CD8-positive, alpha-beta T cell (primary cell): ENCODE measurements at regions of chr2 and their contacts with region 1.

Region 1: GRCh38 chr2:207529330-207530159 is at the start of gene CREB1:
- DNase-seq: peak; percentile 99 to 100 (median 100)
- ATAC-seq: peak; percentile 80
- H3K4me3 ChIP-seq: peak within 1 kb of the TSS; percentile 73 to 82
- H3K4me3 Mint-ChIP-seq: peak within 1 kb of the TSS; percentile 90
- H3K27ac ChIP-seq: peak within 1 kb of the TSS; percentile 97 to 99
- H3K27ac Mint-ChIP-seq: peak within 1 kb of the TSS; percentile 98
- H3K4me1 ChIP-seq: peaks cover 59% of the 10 kb centered on the region
- H3K4me1 Mint-ChIP-seq: peaks cover 70% of the 10 kb centered on the region
- H3K27me3 ChIP-seq: no peaks in the 10 kb centered on the region
- H3K27me3 Mint-ChIP-seq: no peaks in the 10 kb centered on the region
- CTCF ChIP-seq: no peak
- total RNA-seq, gene CREB1: 43.9 to 51.4 TPM

Region 2: DNA sequence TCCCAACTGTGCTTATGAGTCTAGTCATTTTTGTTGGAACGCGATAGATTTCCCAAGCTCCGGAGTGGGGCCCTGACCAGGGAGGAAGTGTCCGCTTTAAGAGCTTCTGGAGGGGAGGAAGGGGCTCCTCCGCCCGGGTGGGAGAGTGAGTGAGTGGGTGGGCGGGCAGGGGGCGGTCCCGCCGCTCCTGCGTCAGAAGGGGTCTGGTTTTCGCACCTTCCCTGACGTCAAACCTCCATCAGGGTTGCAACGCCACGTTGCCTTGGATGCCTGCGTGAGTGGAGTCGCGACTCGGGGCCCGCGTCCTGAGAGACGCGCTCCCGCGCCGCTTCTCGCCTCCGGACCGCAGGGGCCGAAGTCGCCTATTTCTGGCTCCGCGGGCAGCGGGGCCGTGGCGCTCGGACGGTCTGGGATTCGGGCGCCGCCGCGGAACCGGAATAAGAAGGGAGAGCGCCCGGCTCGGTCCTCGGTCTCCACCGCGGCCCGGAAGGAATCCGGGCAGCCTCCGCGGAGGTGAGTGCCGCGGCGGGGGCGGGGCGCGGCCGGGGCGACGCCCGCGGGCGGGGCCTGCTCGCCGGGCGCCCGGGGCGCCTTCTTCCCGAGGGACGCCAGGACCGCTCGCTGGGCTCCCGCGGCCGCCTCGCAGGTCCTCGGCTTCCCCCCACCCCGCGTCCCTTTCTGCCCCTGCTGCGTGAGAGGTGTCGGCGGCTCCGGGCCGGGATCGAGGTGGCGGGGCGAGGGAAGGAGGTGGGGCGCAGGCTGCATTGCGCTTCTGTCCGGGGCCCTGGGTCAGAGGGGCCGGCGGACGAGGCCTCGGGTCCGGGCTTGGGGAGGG is 1254.9 kb before region 1 on chr2 and contains the start of gene ZDBF2:
- CTCF ChIA-PET with region 1: no interaction called
- POLR2A ChIA-PET with region 1: no interaction called
- intact Hi-C with region 1: loop called in 1 of 2 experiments (anchors 10 kb)
- DNase-seq: peak in 8 of 9 experiments; percentile 6 to 77 (median 56)
- ATAC-seq: peak; percentile 73
- H3K4me3 ChIP-seq: peak within 1 kb of the TSS; percentile 48 to 52
- H3K4me3 Mint-ChIP-seq: peak within 1 kb of the TSS; percentile 89
- H3K27ac ChIP-seq: peak within 1 kb of the TSS; percentile 46 to 59
- H3K27ac Mint-ChIP-seq: peak within 1 kb of the TSS; percentile 90
- H3K4me1 ChIP-seq: peaks cover 13% of the 10 kb centered on the region
- H3K4me1 Mint-ChIP-seq: peaks cover 18% of the 10 kb centered on the region
- H3K27me3 ChIP-seq: peaks cover 6 to 16% of the 10 kb centered on the region in 2 experiments
- H3K27me3 Mint-ChIP-seq: peaks cover 42% of the 10 kb centered on the region
- CTCF ChIP-seq: no peak
- total RNA-seq, gene ZDBF2: 39.2 to 42.3 TPM

Region 3: GRCh38 chr2:207473049-207473930 is 56.3 kb before region 1 on chr2:
- CTCF ChIA-PET with region 1: interaction called, 7 read pairs
- POLR2A ChIA-PET with region 1: no interaction called
- intact Hi-C with region 1: loop called in 1 of 2 experiments (anchors 1 kb)
- DNase-seq: peak in 6 of 9 experiments; percentile 9 to 62 (median 37)
- ATAC-seq: peak; percentile 57
- H3K4me3 ChIP-seq: no peak overlapping the region
- H3K4me3 Mint-ChIP-seq: no peak overlapping the region
- H3K27ac ChIP-seq: no peak overlapping the region
- H3K27ac Mint-ChIP-seq: no peak overlapping the region
- H3K4me1 ChIP-seq: no peaks in the 10 kb centered on the region
- H3K4me1 Mint-ChIP-seq: peaks cover 13% of the 10 kb centered on the region
- H3K27me3 ChIP-seq: no peaks in the 10 kb centered on the region
- H3K27me3 Mint-ChIP-seq: no peaks in the 10 kb centered on the region
- CTCF ChIP-seq: peak; percentile 33

Region 4: DNA sequence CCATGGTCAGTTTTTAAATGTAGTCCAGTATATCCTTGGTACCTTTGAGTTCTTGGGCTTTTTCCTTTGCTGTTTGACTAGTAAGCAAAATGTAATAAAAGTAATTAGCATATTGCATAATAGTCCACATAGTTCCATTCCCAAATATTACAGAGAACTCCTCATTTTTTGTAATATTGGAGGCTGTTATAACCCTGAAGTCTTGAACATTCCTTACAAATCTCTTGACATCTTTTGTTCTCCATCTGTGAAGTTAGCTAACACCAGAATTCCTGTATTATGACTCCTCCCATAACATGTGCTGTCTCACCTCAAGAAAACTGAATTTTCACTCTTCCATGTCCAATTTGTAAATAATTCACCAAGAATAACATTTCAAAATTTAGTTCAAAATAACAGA is 17.3 kb after region 1 on chr2:
- CTCF ChIA-PET with region 1: no interaction called
- POLR2A ChIA-PET with region 1: interaction called, 14 read pairs
- intact Hi-C with region 1: loop called (anchors 2 kb)
- DNase-seq: no peak
- ATAC-seq: no peak
- H3K4me3 ChIP-seq: no peak overlapping the region
- H3K4me3 Mint-ChIP-seq: no peak overlapping the region
- H3K27ac ChIP-seq: no peak overlapping the region
- H3K27ac Mint-ChIP-seq: no peak overlapping the region
- H3K4me1 ChIP-seq: peaks cover 11% of the 10 kb centered on the region
- H3K4me1 Mint-ChIP-seq: peaks cover 75% of the 10 kb centered on the region
- H3K27me3 ChIP-seq: no peaks in the 10 kb centered on the region
- H3K27me3 Mint-ChIP-seq: no peaks in the 10 kb centered on the region
- CTCF ChIP-seq: no peak

Region 5: GRCh38 chr2:207769597-207770486 is 240.3 kb after region 1 on chr2 and contains the start of gene FZD5:
- CTCF ChIA-PET with region 1: no interaction called
- POLR2A ChIA-PET with region 1: no interaction called
- intact Hi-C with region 1: loop called (anchors 2 to 5 kb)
- DNase-seq: peak; percentile 44 to 90 (median 74)
- ATAC-seq: peak; percentile 71
- H3K4me3 ChIP-seq: peak within 1 kb of the TSS; percentile 67 to 79
- H3K4me3 Mint-ChIP-seq: peak within 1 kb of the TSS; percentile 95
- H3K27ac ChIP-seq: no peak within 1 kb of the TSS
- H3K27ac Mint-ChIP-seq: no peak within 1 kb of the TSS
- H3K4me1 ChIP-seq: peaks cover 36% of the 10 kb centered on the region
- H3K4me1 Mint-ChIP-seq: peaks cover 33% of the 10 kb centered on the region
- H3K27me3 ChIP-seq: peaks cover 4 to 5% of the 10 kb centered on the region in 2 experiments
- H3K27me3 Mint-ChIP-seq: peaks cover 22% of the 10 kb centered on the region
- CTCF ChIP-seq: no peak
- total RNA-seq, gene FZD5: 0.39 to 0.54 TPM

Region 6: DNA sequence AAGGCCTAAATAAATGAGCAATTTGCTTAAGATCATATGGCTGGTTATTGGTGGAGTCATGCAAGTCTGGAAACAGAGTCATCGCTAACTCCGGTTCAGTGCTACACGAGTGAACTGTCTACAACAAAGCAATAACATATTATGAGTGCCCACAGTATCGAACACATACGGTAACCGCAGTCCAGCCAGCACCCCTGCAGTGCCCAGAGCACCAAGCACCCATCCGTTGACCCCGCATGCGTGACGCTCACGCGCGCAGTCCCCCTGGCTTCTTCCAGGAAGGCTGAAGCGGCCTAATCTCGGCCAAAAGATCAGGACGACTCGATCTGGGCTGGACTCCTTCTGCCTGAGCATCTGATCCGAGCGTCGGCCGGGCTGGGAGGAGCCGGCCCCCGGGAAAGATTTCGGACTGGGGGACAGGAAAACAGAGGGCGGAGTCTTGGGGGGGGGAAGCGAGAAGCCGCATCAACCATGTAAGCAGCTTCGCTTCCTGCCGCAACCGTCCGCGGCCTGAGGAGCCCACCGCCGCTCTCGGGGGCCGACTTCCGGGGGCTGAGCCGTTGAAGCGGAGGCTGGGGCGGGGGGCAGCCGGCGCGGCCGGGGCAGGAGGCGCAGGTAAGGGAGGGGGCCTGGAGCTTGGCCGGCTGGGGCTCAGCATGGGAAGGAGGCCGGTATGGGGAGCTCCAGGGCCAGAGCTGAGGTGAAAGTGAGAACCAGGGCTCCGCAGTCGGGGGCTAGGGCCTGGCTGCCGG is 736.4 kb after region 1 on chr2 and contains the start of gene PIKFYVE:
- CTCF ChIA-PET with region 1: no interaction called
- POLR2A ChIA-PET with region 1: interaction called, 3 read pairs
- intact Hi-C with region 1: loop called in 1 of 2 experiments (anchors 2 kb)
- DNase-seq: peak; percentile 71 to 95 (median 88)
- ATAC-seq: peak; percentile 80
- H3K4me3 ChIP-seq: peak within 1 kb of the TSS; percentile 70 to 86
- H3K4me3 Mint-ChIP-seq: peak within 1 kb of the TSS; percentile 86
- H3K27ac ChIP-seq: peak within 1 kb of the TSS; percentile 67 to 88
- H3K27ac Mint-ChIP-seq: peak within 1 kb of the TSS; percentile 98
- H3K4me1 ChIP-seq: peaks cover 21% of the 10 kb centered on the region
- H3K4me1 Mint-ChIP-seq: peaks cover 45% of the 10 kb centered on the region
- H3K27me3 ChIP-seq: no peaks in the 10 kb centered on the region
- H3K27me3 Mint-ChIP-seq: no peaks in the 10 kb centered on the region
- CTCF ChIP-seq: no peak
- total RNA-seq, gene PIKFYVE: 27.7 to 29.1 TPM